Activated B cell treated with CpG ODN at 0.5 μM for 24 hours (primary cell): ENCODE measurements at regions of chr17 and their contacts with region 1.

Region 1: DNA sequence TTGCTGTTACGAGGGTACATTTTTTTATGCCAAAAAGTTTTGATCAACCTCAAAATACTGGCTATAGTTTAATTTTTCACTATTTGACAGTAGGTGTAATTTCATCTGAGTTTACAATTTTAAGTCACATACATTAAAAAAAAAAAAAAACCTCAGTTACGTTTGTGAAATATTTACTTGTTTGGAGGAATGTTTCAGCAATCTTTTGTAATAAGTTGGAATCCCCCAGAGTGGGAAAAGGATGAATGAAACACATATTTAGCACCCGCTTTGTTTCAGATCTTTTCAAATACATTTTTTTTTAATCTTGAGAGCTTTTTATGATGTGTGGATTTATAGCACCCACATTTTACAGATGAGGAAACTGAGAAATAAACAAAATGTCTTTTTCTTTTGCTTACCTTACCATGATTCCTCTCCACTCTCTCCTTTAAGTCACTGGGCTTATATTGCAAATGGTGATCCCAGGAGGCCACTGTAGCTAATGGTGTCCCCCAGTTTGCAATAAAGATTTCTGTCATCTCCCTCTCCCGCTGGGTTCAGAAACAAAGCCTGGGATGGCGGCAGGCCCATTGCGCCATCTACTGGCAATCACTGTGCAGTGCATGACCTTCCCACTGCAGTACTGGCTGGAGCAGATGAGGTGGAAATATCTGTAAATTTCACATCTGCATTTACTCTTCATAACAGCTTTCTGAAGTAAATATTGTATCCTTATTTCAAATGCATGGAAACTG is 27.7 kb downstream of the TBC1D3B start:
- DNase-seq: peak; percentile 60
- ATAC-seq: peak; percentile 87
- H3K4me3 Mint-ChIP-seq: peak overlapping the region; percentile 25
- H3K27ac Mint-ChIP-seq: peak overlapping the region; percentile 36
- H3K4me1 Mint-ChIP-seq: peaks cover 49% of the 10 kb centered on the region
- H3K27me3 Mint-ChIP-seq: peaks cover 5% of the 10 kb centered on the region
- CTCF ChIP-seq: peak; percentile 86

Region 2: DNA sequence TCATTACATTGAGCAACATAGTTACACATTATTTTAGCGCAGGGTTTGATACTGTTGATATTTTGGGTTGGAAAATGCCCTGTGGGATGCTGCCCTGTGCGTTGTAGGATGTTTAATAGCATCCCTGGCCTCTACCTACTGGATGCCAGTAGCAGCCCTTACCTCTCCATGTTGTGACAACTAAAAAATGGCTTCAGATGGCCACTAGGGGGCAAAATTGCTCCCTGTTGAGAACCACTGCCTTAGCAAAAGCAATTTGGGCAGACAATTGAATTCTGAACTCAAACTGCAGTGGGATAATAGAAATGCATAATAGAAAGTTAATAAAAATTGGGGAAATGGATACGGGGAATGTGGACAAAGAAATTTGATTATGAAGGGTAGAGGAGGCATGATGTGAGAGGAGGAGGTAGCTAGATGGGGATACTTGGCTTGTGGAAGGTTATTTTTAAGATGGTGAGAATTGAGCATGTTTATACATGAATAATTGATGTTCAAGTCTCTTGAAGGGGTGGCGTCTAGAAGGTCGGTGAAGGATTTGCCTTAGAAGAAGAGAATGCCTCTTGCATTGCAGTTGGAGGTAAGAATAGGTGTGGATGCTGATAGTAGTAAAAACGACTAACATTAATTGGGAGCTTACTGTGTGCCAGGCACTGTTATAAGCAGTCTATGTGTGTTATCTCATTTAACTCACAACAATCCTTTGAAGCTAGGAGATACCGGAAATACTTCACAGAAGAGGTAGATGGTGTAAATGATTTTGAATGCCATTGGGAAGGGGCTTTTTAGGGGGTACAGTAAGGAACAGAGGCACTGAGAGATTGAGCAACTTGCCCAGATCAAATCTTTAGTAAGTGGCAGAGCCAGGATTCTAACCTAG is 299.0 kb before region 1 on chr17:
- CTCF ChIA-PET with region 1: no interaction called
- POLR2A ChIA-PET with region 1: no interaction called
- intact Hi-C with region 1: loop called (anchors 1 kb)
- DNase-seq: no peak
- ATAC-seq: peak; percentile 57
- H3K4me3 Mint-ChIP-seq: no peak overlapping the region
- H3K27ac Mint-ChIP-seq: no peak overlapping the region
- H3K4me1 Mint-ChIP-seq: no peaks in the 10 kb centered on the region
- H3K27me3 Mint-ChIP-seq: no peaks in the 10 kb centered on the region
- CTCF ChIP-seq: peak; percentile 52

Region 3: DNA sequence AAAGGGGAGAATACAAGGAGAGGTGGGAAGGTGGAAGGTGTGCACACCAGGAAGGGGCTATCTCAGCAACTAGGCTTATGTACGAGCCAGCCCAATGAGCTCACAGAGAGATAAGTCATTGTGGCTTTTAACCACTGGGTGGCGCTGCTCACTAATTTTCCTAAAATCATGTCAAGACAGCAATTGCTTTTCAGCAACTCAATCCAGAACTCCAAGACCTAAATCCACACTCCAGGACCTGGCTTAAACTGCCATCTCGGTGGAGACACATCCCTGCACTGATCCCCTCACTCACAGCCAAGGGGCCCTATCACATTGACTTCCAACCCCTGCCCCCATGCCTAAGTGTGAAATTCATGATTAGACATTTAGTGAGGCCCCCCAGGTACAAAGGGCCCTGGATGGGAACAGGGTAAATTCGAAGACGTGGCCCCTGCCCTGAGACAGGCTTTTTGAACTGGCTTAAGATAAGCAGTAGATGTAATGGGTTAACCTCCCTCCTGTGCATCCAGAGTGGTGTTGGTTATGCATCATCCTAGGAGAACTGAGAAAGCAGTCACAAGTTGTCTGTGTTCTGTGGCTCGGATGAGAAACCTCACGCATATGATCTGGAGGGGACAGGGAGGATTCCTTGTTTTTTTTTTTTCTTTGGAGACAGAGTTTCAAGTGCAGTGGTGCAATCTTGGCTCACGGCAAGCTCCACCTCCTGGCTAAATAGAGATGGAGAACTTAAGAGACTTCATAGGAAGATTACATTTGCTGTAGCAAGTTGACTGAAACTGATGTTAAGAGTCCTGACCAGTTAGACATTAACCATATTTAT is 179.0 kb before region 1 on chr17:
- CTCF ChIA-PET with region 1: interaction called, 481 read pairs
- POLR2A ChIA-PET with region 1: interaction called, 10 read pairs
- intact Hi-C with region 1: loop called (anchors 1 kb)
- DNase-seq: peak; percentile 49
- ATAC-seq: peak; percentile 84
- H3K4me3 Mint-ChIP-seq: no peak overlapping the region
- H3K27ac Mint-ChIP-seq: no peak overlapping the region
- H3K4me1 Mint-ChIP-seq: peaks cover 1% of the 10 kb centered on the region
- H3K27me3 Mint-ChIP-seq: peaks cover 5% of the 10 kb centered on the region
- CTCF ChIP-seq: peak; percentile 62

Region 4: DNA sequence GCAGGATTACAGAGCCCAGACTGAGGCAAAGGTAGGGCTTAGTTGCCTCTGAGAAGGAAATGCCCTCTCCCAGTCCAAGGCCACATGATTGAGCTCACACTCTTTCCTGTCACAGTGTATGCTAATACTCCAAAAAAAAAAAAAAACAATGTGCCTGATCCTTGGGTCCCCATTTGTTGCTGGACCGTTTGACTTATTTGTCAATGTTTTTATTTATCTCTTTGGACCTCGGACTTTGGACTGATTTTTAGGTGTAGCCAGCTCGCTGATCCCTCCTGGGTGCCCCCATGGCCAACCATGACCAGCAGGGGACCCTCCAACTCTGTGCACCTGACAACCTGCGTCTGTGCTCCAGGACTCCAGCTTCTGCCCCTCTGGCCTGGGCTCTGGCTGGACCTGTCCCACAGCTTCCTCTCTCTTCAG is 166.8 kb before region 1 on chr17:
- CTCF ChIA-PET with region 1: interaction called, 481 read pairs
- POLR2A ChIA-PET with region 1: no interaction called
- intact Hi-C with region 1: loop called (anchors 1 kb)
- DNase-seq: no peak
- ATAC-seq: peak; percentile 54
- H3K4me3 Mint-ChIP-seq: no peak overlapping the region
- H3K27ac Mint-ChIP-seq: no peak overlapping the region
- H3K4me1 Mint-ChIP-seq: peaks cover 12% of the 10 kb centered on the region
- H3K27me3 Mint-ChIP-seq: peaks cover 11% of the 10 kb centered on the region
- CTCF ChIP-seq: no peak

Region 5: GRCh38 chr17:36072431-36073121 is 76.2 kb before region 1 on chr17:
- CTCF ChIA-PET with region 1: interaction called, 76 read pairs
- POLR2A ChIA-PET with region 1: interaction called, 3 read pairs
- intact Hi-C with region 1: loop called (anchors 1 kb)
- DNase-seq: no peak
- ATAC-seq: peak; percentile 69
- H3K4me3 Mint-ChIP-seq: no peak overlapping the region
- H3K27ac Mint-ChIP-seq: no peak overlapping the region
- H3K4me1 Mint-ChIP-seq: peaks cover 9% of the 10 kb centered on the region
- H3K27me3 Mint-ChIP-seq: peaks cover 4% of the 10 kb centered on the region
- CTCF ChIP-seq: peak; percentile 59

Region 6: DNA sequence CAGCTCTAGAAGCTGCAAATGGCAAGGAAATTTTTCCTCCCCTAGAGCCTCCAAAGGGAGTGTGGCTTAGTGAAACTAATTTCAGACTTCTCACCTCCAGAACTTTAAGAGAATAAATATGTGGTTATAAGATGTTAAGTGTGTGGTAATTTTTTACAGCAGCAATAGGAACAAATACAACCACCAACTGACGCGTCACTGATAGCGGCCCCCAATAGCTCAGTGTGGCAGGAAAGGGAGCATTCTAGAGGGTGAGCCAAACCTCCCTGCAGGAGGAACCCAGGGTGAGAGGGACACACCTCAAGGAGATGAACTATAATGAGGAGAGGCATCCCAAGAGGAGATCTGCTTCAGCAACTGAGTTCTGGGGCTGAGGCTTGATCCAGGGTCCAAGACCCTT is 41.1 kb before region 1 on chr17:
- CTCF ChIA-PET with region 1: interaction called, 16 read pairs
- POLR2A ChIA-PET with region 1: interaction called, 4 read pairs
- intact Hi-C with region 1: no loop called
- DNase-seq: no peak
- ATAC-seq: no peak
- H3K4me3 Mint-ChIP-seq: no peak overlapping the region
- H3K27ac Mint-ChIP-seq: no peak overlapping the region
- H3K4me1 Mint-ChIP-seq: peaks cover 46% of the 10 kb centered on the region
- H3K27me3 Mint-ChIP-seq: peaks cover 5% of the 10 kb centered on the region
- CTCF ChIP-seq: no peak

Region 7: DNA sequence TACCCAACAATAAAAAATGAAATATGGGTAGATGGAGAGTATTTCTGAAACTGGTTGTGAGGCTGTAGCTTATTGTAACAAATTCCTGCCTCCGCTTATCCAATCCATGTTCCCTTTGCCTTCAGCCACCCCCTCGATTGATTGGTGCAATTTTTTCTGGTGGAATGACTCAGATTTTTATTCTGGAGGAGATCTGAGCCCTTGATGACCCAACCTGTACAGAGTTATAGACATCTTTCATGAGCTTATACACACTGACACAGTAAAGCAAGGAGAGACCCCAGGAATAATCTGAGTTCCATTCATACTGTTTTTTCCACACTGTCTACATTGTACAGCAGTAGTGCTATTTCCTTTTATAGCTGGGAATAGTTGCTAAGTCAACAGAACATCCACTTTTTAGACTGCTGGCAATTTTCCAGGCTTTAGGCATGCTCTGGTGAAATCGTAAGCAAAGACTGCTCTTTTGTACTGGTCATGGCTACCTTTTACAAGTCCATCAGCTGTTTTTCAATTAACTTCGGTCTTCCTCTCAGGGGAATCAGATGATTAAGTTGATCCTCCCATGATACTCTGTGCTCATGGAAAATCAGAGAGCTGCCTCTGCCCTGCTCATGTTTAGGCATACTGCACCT is 15.0 kb before region 1 on chr17:
- CTCF ChIA-PET with region 1: interaction called, 16 read pairs
- POLR2A ChIA-PET with region 1: interaction called, 3 read pairs
- intact Hi-C with region 1: no loop called
- DNase-seq: no peak
- ATAC-seq: no peak
- H3K4me3 Mint-ChIP-seq: no peak overlapping the region
- H3K27ac Mint-ChIP-seq: peak overlapping the region; percentile 8
- H3K4me1 Mint-ChIP-seq: peaks cover 91% of the 10 kb centered on the region
- H3K27me3 Mint-ChIP-seq: no peaks in the 10 kb centered on the region
- CTCF ChIP-seq: no peak